Posterior cingulate gyrus (tissue), 11 donors: ENCODE measurements at regions of chr22 and their contacts with region 1.

Region 1: DNA sequence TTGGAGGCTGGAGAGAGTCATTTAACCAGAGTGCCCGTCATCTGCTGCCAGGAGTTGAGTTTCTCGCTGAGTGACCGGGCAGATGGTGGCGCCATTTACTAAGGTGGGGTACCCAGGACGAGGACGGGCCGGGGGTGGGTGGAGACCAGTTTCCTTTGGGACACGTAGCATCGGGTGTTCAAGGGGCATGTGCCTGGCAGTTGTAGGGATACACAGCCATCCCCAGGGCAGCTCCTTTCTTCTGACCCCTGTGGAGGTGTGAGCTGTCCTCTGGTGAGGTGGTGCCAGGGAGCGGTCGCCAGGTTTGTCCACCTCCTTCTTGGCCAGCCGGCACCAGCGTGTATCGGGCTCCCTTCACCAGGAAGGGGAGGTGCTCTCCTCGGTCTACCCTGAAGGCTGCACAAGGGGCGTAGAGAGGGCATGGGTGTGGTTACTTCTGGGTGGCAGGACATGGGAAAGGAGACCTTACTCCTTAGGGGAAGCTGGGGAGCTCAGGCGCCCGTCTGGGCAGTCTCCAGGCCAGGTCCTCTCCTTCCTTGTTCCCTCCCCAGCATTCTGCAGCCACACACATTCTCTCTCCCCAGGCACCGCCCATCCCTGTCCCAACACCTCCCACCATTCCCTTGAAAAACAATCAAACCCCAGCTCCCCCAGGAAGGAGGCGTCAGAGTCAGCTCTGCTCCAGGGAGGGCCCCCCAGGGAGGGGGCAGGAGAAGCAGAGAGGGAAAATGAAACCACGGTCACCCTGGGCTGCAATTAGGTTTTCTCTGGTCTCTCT is 10.3 kb upstream of the MB start:
- DNase-seq: peak in 9 of 10 donors; percentile 34 to 93 (median 59)

Region 2: DNA sequence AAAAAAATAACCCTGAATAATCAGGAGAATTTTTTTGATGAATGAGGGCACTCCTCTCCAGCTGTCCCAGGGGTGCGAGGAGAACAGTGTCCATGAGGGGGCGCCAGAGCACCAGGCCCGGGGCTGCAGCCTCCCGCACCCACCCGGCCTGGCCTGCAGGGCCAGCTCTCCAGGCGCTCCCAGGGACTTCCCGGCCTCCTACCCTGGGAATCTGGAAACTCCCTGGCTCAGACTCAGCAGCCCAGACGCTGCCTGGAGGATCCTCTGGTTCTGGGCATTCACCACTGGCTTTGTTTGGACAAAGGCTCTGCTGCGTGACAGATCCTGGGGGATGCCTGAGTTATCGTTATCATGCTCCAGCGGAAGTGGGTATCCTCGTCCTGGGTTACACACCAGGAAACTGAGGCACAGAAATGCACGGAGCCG is 196.5 kb before region 1 on chr22:
- intact Hi-C with region 1: loop called (anchors 1 kb)
- DNase-seq: peak; percentile 72 to 98 (median 88)

Region 3: DNA sequence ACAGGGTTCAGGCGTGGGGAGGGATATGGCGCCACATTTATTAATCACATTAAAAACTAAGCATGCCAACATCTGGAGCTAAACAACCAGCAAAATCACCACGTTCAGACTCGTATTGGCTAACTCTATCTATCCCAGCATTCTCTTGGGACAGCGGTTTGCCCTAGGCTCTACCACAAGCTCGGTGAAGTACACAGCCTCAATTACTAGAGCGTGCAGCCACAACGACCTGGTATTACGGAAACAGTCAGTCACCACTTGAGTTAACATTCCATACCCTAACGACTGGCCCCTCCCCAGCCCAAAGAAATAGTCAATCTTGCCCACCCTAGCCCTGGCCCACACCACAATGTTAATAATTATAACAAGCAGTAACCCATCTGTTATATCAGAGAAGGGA is 122.4 kb after region 1 on chr22:
- intact Hi-C with region 1: no loop called
- DNase-seq: no peak

Region 4: DNA sequence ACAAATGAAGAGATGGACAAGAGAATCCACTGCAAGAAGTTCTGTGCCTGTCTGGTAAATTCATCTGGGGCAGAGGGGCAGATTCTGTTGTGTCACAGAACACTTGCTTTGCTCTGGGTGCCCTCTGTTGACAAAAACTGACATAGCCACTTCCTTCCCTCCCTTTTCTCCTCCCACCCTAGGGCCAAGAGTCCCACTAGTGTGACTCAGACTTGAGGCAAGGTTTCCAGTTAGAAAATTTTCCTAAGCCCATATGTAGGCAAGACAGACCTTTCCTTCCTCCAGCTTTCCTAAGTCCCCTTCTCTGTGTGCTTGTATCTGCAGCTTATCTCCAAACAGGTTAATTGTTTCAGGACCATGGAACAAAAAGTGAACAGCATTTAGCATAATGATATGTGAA is 294.3 kb after region 1 on chr22:
- intact Hi-C with region 1: loop called (anchors 2 kb)
- DNase-seq: peak in 3 of 10 donors; percentile 20 to 54 (median 25)

Region 5: GRCh38 chr22:36123673-36124630 is 496.5 kb after region 1 on chr22:
- intact Hi-C with region 1: loop called (anchors 5 kb)
- DNase-seq: peak; percentile 83 to 99 (median 90)